ENCODE measurements at regions of chr1 and their contacts with region 1.

Region 1: GRCh38 chr1:226121587-226122400 is 59.3 kb downstream of the H3-3A start:
- DNase-seq: peak; percentile 94

Region 2: GRCh38 chr1:225612287-225612686 is 509.5 kb before region 1 on chr1:
- CTCF ChIA-PET with region 1: no interaction called
- POLR2A ChIA-PET with region 1: no interaction called
- DNase-seq: no peak

Region 3: GRCh38 chr1:226083302-226084101 is 38.3 kb before region 1 on chr1:
- CTCF ChIA-PET with region 1: interaction called, 5 read pairs
- POLR2A ChIA-PET with region 1: interaction called, 17 read pairs
- DNase-seq: peak; percentile 98

Region 4: DNA sequence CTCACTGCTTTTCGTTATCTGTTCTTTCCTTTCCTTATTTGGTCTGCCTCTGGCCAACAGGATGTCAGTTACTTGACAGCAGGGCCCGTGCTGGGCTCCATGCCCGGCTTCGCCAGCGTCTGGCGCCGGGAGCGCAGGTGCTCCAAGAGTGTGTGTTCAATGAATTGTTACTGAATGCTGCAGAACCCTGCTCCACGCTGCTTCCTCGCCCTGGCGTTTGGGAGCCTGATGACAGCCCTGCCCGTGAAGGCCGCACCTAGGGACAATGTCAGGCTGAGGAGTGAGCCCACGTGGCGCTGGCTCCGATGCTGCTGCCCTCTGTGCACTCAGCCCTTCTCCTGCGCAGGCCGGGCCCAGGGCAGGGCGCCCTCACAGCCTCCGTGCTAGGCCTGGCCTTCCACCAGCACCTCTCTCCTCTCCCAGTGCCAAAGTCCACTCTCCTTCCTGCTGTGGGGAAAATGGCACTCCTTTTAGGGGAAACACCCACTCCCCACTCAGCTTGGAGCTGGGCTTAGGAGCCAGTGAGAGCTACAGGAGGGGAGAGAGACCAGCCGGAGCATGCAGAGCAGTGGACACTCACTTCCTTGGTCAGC is 13.4 kb after region 1 on chr1:
- CTCF ChIA-PET with region 1: interaction called, 14 read pairs
- POLR2A ChIA-PET with region 1: interaction called, 8 read pairs
- DNase-seq: no peak

Region 5: GRCh38 chr1:226201029-226201593 is 79.3 kb after region 1 on chr1:
- CTCF ChIA-PET with region 1: interaction called, 29 read pairs
- POLR2A ChIA-PET with region 1: interaction called, 6 read pairs
- DNase-seq: peak; percentile 52

Region 6: DNA sequence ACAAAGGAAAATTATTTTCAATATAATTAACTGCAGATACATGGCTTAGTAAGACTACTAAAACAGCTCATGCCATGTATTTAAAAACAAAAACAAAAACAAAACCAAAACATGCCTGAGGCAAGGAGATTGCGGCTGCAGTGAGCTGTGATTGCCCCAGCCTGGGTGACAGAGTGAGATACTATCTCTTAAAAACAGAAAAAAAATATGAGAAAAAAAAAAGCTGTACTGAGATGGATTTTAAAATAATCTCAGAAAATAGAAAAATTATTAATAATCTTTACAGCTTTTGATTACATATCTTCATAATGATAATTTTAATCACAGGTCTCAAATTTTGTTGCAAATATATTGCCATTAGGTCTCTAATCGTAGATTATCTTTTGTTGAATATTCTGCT is 211.2 kb after region 1 on chr1:
- CTCF ChIA-PET with region 1: interaction called, 42 read pairs
- POLR2A ChIA-PET with region 1: interaction called, 5 read pairs
- DNase-seq: no peak

Region 7: DNA sequence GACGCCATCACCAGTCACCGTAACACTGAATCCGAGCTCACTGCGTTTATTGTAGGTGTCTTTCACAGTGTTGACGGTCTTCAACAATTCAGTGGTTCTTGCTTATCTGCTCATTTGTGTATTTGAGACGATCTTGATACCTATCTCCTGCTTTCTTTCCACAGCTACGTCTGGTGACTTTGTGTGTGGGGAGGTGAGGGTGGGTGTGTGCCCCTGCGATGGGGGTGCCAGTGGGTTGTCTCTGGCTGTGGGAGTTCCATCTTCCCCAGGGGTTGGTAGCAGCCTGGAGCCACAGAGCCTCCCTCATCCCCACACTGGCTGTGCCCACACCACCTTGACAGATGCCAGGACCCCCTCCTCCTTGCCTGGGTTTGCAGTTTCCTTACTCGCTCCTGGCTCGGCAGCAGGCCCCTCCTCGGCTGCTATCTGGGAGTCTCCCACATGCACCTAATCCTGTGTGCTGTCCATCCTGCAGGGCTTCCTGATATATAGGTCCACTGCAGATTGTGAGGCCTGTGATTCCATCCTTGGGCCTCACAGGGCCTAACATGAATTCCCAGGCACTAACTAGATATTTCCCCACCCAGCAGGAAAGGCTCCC is 292.4 kb after region 1 on chr1:
- CTCF ChIA-PET with region 1: no interaction called
- POLR2A ChIA-PET with region 1: no interaction called
- DNase-seq: no peak